ENCODE measurements at regions of chr22 and their contacts with region 1.

Region 1: DNA sequence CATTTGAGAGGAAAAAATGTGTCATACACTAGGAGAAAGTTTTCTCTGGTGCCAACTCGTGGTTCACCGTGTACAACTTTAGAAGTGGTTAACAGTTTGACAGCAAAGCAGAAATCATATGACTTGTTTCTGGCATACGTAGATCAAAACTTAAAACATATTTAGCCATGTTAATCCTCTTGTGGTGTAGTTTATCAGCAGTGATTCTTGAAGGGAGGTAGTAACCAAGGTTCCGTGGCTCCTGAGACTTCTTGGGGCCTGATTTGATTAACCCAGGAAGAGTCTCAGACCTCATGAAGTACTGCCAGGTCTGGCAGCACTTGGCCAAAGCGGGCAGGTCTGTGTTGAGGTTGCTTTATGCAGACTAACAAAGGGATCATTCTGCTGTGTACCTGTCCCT is 40.5 kb downstream of the SREBF2 start:
- DNase-seq: no peak
- ATAC-seq: peak; percentile 29
- H3K4me3 Mint-ChIP-seq: no peak overlapping the region
- H3K27ac Mint-ChIP-seq: peak overlapping the region; percentile 48
- H3K4me1 Mint-ChIP-seq: peaks cover 20% of the 10 kb centered on the region
- H3K27me3 Mint-ChIP-seq: no peaks in the 10 kb centered on the region
- CTCF ChIP-seq: no peak

Region 2: DNA sequence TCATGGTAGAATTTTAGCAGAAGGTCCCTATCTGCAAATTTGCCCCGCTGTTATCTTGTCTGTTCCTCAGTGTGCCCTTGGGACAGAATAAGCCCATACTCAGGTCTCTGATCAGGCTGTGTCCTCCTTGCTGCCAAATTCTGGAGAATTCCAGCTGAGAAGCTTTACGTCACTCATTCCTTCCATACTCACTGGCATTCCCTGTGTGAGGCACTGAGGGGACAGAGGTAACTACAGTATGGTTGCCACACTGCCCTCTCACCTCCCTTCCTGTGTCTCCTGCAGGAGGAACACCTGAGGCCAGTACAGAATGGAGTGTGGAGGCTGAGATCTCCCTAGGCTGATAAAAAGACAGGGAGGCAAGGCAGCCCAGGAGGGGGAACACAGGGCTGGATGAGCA is 10.0 kb after region 1 on chr22:
- CTCF ChIA-PET with region 1: no interaction called
- POLR2A ChIA-PET with region 1: interaction called, 13 read pairs
- intact Hi-C with region 1: loop called (anchors 2 kb)
- DNase-seq: no peak
- ATAC-seq: no peak
- H3K4me3 Mint-ChIP-seq: no peak overlapping the region
- H3K27ac Mint-ChIP-seq: peak overlapping the region; percentile 63
- H3K4me1 Mint-ChIP-seq: peaks cover 63% of the 10 kb centered on the region
- H3K27me3 Mint-ChIP-seq: no peaks in the 10 kb centered on the region
- CTCF ChIP-seq: no peak

Region 3: DNA sequence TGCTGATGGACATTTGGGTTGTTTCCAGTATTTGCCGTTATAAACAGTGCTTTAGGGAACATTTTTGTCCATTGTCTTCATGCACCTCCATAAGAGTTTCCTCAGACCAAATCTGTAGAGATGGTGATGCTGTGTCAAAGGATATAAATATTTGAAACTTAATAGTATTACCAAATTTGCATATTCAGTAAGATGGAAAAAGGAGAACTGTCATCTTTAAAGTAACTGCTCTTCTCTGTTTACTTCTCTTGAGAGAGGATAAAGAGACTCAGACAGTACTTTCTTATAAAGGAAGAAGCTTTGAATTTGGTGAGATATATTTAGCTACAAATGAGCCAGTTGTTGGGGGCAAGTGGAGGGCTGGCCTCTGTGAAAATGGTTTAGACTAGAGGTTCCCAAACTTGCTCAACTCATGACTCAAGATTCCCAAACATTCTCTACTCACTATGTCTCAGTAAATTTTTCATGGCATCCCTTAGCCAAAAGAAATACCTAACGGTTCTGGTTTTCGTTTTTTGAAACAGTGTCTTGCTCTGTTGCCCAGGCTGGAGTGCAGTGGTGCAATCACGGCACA is 15.3 kb after region 1 on chr22:
- CTCF ChIA-PET with region 1: no interaction called
- POLR2A ChIA-PET with region 1: interaction called, 4 read pairs
- intact Hi-C with region 1: loop called (anchors 2 kb)
- DNase-seq: no peak
- ATAC-seq: peak; percentile 28
- H3K4me3 Mint-ChIP-seq: peak overlapping the region; percentile 4
- H3K27ac Mint-ChIP-seq: peak overlapping the region; percentile 74
- H3K4me1 Mint-ChIP-seq: peaks cover 59% of the 10 kb centered on the region
- H3K27me3 Mint-ChIP-seq: no peaks in the 10 kb centered on the region
- CTCF ChIP-seq: no peak

Measured in activated B cell treated with CpG ODN at 0.5 μM for 24 hours (primary cell).